ENCODE measurements at regions of chr12 and their contacts with region 1.

Region 1: DNA sequence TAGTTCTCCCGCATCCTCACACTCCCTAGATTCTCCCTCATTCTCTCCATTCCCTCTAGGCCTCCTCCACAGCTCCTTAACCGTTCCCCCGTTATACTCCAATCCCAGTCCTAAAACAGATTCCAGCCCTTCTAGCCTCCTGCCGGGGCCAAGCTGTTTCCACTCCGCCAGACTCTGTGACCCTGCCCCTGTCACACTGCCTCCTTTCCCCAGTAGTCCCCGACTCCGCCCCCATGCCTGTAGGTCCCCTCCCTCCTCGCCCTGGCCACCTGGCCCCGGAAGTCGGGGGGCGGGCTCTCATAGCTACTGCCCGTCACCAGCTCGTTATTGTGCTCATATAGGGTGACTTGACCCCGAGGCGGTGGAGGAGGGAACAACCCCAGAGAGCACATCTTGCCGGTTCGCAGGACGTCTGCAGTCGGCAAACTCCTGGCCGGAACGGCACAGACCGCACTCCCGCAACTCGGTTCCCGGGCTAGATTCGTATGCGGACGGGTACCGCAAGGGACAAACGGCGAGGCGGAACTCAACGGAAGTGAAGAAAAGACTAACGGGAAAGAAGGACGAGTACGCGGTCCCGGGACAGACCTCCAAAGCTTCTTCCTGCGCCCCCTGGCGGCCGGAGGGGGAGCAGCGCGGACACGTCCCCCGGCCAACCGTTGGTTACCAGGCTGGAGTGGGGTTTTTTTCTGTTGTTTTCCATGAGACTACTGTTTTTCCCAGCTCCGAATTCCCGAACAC is at the start of gene AAAS:
- DNase-seq: peak; percentile 95 to 99 (median 98)
- H3K4me3 ChIP-seq: peak within 1 kb of the TSS; percentile 71 to 97 (median 90)
- H3K27ac ChIP-seq: peak within 1 kb of the TSS; percentile 75 to 85
- H3K4me1 ChIP-seq: peaks cover 4 to 47% (median 36%) of the 10 kb centered on the region in 4 experiments
- H3K27me3 ChIP-seq: no peaks in the 10 kb centered on the region

Region 2: DNA sequence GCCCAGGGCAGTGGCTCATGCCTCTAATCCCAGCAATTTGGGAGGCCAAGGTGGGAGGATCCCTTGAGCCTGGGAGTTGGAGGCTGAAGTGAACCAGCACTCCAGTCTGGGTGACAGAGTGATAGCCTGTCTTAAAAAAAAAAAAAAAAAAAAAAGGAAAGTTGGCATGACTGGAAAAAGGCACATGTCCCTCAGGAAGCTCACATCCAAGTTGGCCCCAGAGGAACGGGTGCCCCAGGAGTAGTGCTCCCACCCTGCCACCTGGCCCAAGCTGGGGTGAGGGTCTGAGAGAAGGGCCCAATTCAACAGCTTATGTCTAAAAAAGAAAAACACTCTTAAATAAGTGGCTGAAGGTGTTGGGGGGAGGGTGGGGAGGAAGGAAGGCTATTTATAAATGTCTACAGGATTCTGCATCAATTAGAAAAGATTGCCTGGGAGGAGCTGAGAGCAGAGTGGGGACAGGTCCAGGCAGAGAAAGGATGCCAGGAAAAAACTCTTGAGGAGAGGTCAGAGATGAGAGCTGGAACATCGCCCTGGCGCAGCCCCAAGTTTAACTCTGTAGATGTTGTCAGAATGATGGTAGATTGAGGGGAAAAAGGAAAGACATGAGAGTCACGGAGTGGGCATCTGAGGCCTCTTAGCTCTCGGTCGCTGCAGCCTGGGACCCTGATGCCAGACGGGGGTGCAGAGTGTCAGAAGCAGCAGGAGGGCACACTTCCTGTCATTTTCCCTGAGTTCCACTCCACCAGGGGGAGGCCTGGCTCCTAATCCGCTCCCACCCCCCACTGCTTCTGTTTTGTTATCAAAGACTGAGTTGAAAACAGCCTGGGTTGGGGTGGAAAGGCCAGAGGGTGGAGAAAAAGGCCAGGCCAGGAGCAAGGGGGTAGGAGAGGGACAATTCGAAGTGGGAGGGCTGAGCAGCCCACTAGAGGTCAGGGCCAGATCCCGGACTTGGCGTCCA is 249.4 kb before region 1 on chr12:
- CTCF ChIA-PET with region 1: no interaction called
- POLR2A ChIA-PET with region 1: no interaction called
- DNase-seq: no peak
- H3K4me3 ChIP-seq: no peak overlapping the region
- H3K27ac ChIP-seq: no peak overlapping the region
- H3K4me1 ChIP-seq: peaks cover 0 to 27% (median 8%) of the 10 kb centered on the region in 4 experiments
- H3K27me3 ChIP-seq: no peaks in the 10 kb centered on the region

Region 3: GRCh38 chr12:53213348-53213747 is 107.9 kb before region 1 on chr12:
- CTCF ChIA-PET with region 1: interaction called, 99 read pairs
- POLR2A ChIA-PET with region 1: no interaction called
- DNase-seq: peak; percentile 78 to 86 (median 82)
- H3K4me3 ChIP-seq: no peak overlapping the region
- H3K27ac ChIP-seq: no peak overlapping the region
- H3K4me1 ChIP-seq: peaks cover 2 to 65% (median 55%) of the 10 kb centered on the region in 4 experiments
- H3K27me3 ChIP-seq: no peaks in the 10 kb centered on the region

Region 4: DNA sequence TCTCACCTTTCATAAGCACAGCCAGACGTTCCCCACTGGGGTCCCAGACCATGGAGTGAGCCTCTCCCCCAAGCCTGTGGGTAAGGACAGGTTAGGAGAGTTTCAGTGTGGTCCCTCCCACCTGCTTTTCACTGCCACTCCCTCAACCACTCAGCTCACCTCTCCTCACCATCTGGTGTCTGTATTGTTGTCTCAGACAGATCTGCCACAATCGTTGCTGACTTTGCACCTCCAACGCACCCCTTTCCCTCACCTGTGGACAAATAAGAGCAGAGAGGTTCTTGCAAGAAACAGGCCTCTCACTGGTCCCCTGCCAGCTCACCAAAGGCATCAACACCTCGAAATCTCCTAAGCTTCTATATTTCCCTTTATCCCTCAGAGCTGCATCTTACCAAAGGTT is 13.0 kb before region 1 on chr12:
- CTCF ChIA-PET with region 1: interaction called, 171 read pairs
- POLR2A ChIA-PET with region 1: no interaction called
- DNase-seq: no peak
- H3K4me3 ChIP-seq: no peak overlapping the region
- H3K27ac ChIP-seq: peak overlapping the region in 1 of 2 experiments; percentile 3
- H3K4me1 ChIP-seq: no peaks in the 10 kb centered on the region
- H3K27me3 ChIP-seq: no peaks in the 10 kb centered on the region

Region 5: GRCh38 chr12:53344824-53345485 is 23.7 kb after region 1 on chr12:
- CTCF ChIA-PET with region 1: interaction called, 489 read pairs
- POLR2A ChIA-PET with region 1: interaction called, 16 read pairs
- DNase-seq: peak; percentile 79 to 82 (median 80)
- H3K4me3 ChIP-seq: peak overlapping the region; percentile 45 to 91 (median 77)
- H3K27ac ChIP-seq: no peak overlapping the region
- H3K4me1 ChIP-seq: peaks cover 0 to 22% (median 17%) of the 10 kb centered on the region in 4 experiments
- H3K27me3 ChIP-seq: peaks cover 0 to 2% (median 0%) of the 10 kb centered on the region in 5 experiments